ENCODE measurements at regions of chr7 and their contacts with region 1.

Region 1: DNA sequence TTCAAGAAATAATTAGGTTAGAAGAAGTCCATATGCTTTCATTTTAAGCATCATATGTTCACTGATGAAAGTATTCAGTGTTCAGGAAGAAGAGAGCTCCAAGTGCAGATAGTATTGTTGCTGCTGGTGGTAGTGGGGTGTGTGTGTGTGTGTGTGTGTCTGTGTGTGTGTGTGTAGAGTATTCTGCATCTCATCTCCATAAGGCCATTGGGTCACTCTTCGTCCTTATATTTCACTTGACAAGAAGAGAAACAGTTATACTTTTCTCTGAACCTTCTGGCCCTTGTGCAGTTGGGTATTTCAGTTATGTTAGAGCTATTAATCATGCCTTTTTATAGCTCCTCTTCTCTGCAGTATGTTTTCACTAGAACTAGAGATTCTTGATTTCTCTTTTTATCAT is 26.2 kb downstream of the ADAM22 start:
- DNase-seq: no peak
- ATAC-seq: no peak
- H3K4me3 ChIP-seq: no peak overlapping the region
- H3K27ac ChIP-seq: no peak overlapping the region
- H3K4me1 ChIP-seq: no peaks in the 10 kb centered on the region
- H3K27me3 ChIP-seq: no peaks in the 10 kb centered on the region
- CTCF ChIP-seq: no peak
- EP300 ChIP-seq: no peak
- POLR2A ChIP-seq: no peak
- RAD21 ChIP-seq: no peak

Region 2: GRCh38 chr7:87944531-87944930 is 15.7 kb before region 1 on chr7:
- CTCF ChIA-PET with region 1: interaction called, 4 read pairs
- POLR2A ChIA-PET with region 1: interaction called, 3 read pairs
- RAD21 ChIA-PET with region 1: interaction called, 4 read pairs
- SMC1A ChIA-PET with region 1: interaction called, 10 read pairs
- in situ Hi-C with region 1: no loop called
- intact Hi-C with region 1: no loop called
- DNase-seq: no peak
- ATAC-seq: peak; percentile 77
- H3K4me3 ChIP-seq: no peak overlapping the region
- H3K27ac ChIP-seq: no peak overlapping the region; the same call in 1 of the 2 replicates
- H3K4me1 ChIP-seq: peaks cover 6% of the 10 kb centered on the region; the same call in 1 of the 2 replicates
- H3K27me3 ChIP-seq: no peaks in the 10 kb centered on the region
- CTCF ChIP-seq: no peak
- EP300 ChIP-seq: no peak
- POLR2A ChIP-seq: no peak
- RAD21 ChIP-seq: no peak

Region 3: DNA sequence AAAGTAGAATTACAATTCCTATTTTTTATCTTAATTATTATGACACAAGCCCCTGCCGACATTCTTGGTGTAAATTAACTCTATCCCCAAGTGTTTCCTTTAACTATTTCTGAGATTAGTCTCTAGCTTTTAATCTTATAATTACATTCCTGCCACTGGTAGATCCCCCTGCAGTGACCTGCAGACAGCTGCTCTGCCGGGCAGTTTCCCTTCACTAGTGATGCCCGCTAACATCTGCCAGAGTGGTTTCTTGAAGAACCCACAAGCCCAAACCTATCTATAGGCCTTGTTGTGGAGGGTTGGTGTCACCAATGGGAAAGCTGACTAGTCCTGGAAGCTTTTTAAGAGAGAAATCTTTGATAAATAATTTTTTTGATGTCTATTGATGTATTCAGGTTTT is 23.8 kb after region 1 on chr7:
- CTCF ChIA-PET with region 1: no interaction called
- POLR2A ChIA-PET with region 1: no interaction called
- RAD21 ChIA-PET with region 1: no interaction called
- SMC1A ChIA-PET with region 1: interaction called, 11 read pairs
- in situ Hi-C with region 1: no loop called
- intact Hi-C with region 1: no loop called
- DNase-seq: no peak
- ATAC-seq: no peak
- H3K4me3 ChIP-seq: no peak overlapping the region
- H3K27ac ChIP-seq: no peak overlapping the region
- H3K4me1 ChIP-seq: no peaks in the 10 kb centered on the region
- H3K27me3 ChIP-seq: no peaks in the 10 kb centered on the region
- CTCF ChIP-seq: no peak
- EP300 ChIP-seq: no peak
- POLR2A ChIP-seq: no peak
- RAD21 ChIP-seq: no peak

Measured in GM12878 (cell line).